Caco-2 (cell line): ENCODE measurements at regions of chrX and their contacts with region 1.

Region 1: GRCh38 chrX:46836701-46837557 is at the start of gene RP2:
- DNase-seq: peak; percentile 92 to 95
- H3K4me3 ChIP-seq: peak within 1 kb of the TSS; percentile 63
- H3K4me3 Mint-ChIP-seq: peak within 1 kb of the TSS; percentile 95
- H3K27ac Mint-ChIP-seq: peak within 1 kb of the TSS; percentile 97
- H3K4me1 ChIP-seq: peaks cover 12% of the 10 kb centered on the region
- H3K4me1 Mint-ChIP-seq: no peaks in the 10 kb centered on the region
- H3K27me3 ChIP-seq: no peaks in the 10 kb centered on the region
- H3K27me3 Mint-ChIP-seq: no peaks in the 10 kb centered on the region
- CTCF ChIP-seq: no peak
- total RNA-seq, gene RP2: 32.7 and 33.1 TPM in 2 replicates

Region 2: DNA sequence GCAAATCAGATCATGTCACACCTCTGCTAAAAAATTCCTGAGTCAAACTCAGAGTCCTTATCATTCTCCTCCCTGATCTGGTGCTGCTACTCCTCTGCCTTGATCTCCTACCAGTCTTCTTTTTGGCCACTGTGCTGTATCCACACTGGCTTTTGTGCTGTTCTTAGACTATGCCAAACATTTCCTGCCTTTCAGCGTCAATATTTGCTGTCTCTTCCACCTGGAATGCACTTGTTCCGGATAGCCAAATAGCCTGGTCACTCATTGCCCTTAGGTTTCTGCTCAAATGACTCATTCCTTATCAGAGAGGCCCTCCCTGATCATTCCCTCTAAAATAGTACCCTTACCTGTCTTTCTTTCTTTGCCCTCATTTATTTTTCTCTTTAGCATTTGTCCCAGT is 24.5 kb before region 1 on chrX:
- CTCF ChIA-PET with region 1: no interaction called
- POLR2A ChIA-PET with region 1: interaction called, 5 read pairs
- intact Hi-C with region 1: loop called (anchors 1 kb)
- DNase-seq: peak; percentile 77 to 83
- H3K4me3 ChIP-seq: no peak overlapping the region
- H3K4me3 Mint-ChIP-seq: peak overlapping the region; percentile 61
- H3K27ac Mint-ChIP-seq: peak overlapping the region; percentile 93
- H3K4me1 ChIP-seq: peaks cover 33% of the 10 kb centered on the region
- H3K4me1 Mint-ChIP-seq: peaks cover 26% of the 10 kb centered on the region
- H3K27me3 ChIP-seq: no peaks in the 10 kb centered on the region
- H3K27me3 Mint-ChIP-seq: no peaks in the 10 kb centered on the region
- CTCF ChIP-seq: no peak

Region 3: GRCh38 chrX:46820381-46821100 is 16.4 kb before region 1 on chrX:
- CTCF ChIA-PET with region 1: no interaction called
- POLR2A ChIA-PET with region 1: interaction called, 5 read pairs
- intact Hi-C with region 1: loop called (anchors 1 kb)
- DNase-seq: peak; percentile 61 to 63
- H3K4me3 ChIP-seq: no peak overlapping the region
- H3K4me3 Mint-ChIP-seq: peak overlapping the region; percentile 41
- H3K27ac Mint-ChIP-seq: peak overlapping the region; percentile 86
- H3K4me1 ChIP-seq: peaks cover 35% of the 10 kb centered on the region
- H3K4me1 Mint-ChIP-seq: peaks cover 30% of the 10 kb centered on the region
- H3K27me3 ChIP-seq: no peaks in the 10 kb centered on the region
- H3K27me3 Mint-ChIP-seq: no peaks in the 10 kb centered on the region
- CTCF ChIP-seq: no peak

Region 4: DNA sequence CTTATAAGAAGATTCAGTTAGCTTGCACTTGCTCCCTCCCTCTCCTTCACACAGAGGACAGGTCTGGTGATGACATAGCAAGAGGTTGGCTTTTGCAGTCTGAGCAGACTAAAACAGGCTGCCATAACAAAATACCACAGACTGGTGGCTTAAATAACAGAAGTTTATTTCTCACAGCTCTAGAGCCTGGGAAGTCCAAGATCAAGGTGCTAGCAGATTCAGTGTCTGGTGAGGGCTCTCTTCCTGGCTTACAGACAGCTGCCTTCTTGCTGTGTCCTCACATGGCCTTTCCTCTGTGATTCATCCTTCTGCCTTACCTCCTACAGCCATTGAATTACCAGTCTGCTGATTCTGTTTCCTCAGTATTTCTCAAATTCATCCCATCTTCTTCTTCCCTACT is 13.0 kb after region 1 on chrX:
- CTCF ChIA-PET with region 1: no interaction called
- POLR2A ChIA-PET with region 1: no interaction called
- intact Hi-C with region 1: no loop called
- DNase-seq: no peak
- H3K4me3 ChIP-seq: no peak overlapping the region
- H3K4me3 Mint-ChIP-seq: no peak overlapping the region
- H3K27ac Mint-ChIP-seq: no peak overlapping the region
- H3K4me1 ChIP-seq: no peaks in the 10 kb centered on the region
- H3K4me1 Mint-ChIP-seq: peaks cover 9% of the 10 kb centered on the region
- H3K27me3 ChIP-seq: no peaks in the 10 kb centered on the region
- H3K27me3 Mint-ChIP-seq: no peaks in the 10 kb centered on the region
- CTCF ChIP-seq: no peak